ENCODE measurements at regions of chr3 and their contacts with region 1.

Region 1: DNA sequence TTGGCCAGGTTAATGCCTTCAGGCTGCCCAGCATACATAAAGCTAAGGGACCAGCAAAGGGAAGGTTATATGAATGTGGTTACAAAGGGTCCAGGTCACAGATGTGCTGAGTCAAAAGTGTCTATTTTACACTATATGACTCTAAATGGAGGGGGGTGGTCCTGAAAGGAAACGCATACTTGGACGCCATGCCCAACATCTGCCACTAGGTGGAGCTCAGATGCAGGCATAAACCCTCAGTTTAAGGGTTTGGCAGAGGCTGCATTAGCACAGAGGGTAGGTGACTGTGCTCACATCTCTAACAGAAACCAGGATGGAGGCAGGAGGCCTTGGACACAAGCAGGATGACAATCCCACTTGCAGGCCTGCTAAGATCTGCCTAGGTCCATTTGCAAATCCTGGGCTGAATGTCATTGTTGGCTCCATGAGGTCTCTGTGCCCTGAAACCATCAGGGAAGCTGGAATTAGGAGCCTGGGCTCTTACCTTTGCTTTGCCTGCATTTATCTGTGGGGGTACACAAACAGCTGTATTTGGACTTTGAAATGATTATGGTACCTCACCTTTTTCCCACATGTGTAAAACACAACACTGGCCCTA is 55.8 kb downstream of the ZNF621 start:
- DNase-seq: peak; percentile 74
- H3K4me3 ChIP-seq: no peak overlapping the region
- CTCF ChIP-seq: peak; percentile 97

Region 2: DNA sequence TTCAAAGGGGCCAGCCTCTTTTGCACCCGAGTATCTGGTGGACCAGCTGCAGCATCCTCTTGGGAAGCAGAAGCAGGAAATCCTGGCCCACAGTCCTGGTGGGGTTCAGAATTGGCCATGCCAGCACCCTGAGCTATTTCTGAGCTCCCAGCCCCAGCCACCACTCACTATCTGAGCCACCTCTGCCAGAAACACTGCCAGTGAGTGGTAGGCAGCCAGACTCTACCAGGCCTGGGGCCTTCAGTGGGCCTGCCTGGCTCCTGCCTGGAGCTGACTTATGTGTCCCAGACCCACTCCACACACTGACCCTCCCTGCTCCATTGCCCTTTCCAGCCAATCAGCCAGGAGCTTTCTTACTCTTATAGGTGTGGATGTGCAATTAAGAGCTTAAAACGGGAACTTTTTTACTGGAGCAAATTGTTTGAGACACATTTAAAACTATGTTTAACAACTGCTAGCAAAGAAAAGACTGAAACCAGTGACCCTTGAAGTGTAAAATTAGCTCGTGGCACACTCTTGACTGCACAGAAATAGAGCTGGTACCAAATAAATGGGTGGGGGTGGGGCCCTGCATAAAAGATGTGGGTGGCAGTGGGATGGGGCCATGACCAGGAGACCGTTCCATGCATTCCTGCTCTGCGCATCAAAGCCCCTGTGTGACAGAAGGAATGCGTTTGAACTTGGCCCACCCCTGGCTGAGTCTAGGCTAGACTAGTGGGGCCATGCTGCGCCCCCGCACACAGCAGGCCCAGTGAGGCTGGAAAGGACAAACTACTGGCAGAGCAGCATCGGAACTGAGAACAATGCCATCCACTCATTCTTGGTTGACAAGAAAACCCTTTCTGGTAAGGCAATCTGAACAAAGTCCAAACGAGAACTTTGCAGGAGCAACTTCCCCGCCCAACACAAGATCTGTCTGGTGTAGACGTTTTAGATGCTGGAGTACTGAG is 666.7 kb after region 1 on chr3:
- in situ Hi-C with region 1: loop called (anchors 25 kb)
- DNase-seq: no peak
- H3K4me3 ChIP-seq: no peak overlapping the region
- CTCF ChIP-seq: no peak

Region 3: DNA sequence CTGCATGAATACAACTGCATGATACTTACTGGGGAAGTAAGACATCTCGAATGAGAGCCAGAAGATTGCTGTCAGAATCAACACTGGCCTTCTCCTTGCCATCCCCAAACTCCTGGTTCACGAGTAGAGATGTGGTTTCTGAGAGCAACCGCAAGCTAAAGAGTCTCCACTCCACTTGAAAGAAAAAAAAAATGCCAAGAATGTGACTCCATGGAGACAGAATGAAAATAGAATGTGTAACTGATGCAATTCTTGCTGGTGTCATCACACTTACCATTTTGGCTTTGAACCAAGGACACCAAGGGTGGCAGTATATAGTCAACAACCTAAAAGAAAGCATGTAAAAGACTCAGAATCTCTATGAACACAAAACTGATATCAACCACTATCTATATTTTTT is 1100.9 kb after region 1 on chr3:
- in situ Hi-C with region 1: loop called (anchors 25 kb)
- DNase-seq: peak; percentile 98
- H3K4me3 ChIP-seq: no peak overlapping the region
- CTCF ChIP-seq: no peak

Measured in astrocyte of the spinal cord (primary cell).